ENCODE measurements at regions of chr3 and their contacts with region 1.

Region 1: DNA sequence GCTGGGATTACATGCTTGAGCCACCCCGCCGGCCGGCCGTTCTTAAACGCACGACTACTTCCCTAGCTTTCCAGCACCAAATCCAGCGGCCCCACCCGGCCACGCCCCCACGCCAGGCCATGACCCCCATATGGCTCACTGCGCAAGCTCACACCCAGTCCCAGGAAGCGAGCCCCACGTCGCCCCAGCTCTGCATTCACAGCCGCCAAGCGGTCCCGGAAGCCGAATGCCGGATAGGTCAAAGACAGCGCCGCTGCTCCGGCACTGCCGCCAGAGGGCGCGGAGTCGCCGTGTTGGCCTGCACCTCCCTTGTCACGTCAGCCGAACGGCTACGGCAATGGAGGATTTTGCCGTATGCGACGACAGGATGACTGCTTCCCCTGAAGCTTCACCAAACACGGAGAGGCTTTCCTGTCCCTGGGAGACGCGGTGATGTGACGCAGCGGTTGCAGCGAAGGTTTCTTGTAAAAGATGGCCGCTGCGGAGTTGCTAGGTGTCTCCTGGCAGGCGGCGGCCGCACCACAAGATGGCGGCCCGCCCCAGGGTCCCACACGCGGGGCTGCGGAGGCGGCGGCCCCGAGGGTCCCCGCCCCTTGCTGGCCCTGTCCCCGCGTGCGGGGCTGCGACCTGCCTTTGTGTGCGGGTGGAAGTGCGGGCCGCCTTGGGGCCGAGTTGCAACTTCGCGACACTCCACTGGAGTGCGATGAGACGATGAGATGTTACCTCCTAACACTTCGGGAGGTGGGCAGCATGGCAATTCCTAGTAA is 30.2 kb upstream of the RPN1 start:
- DNase-seq: peak; percentile 93
- ATAC-seq: peak; percentile 99
- H3K4me3 ChIP-seq: peak overlapping the region; percentile 73
- H3K27ac ChIP-seq: peak overlapping the region; percentile 83
- H3K4me1 ChIP-seq: peaks cover 5% of the 10 kb centered on the region
- H3K27me3 ChIP-seq: no peaks in the 10 kb centered on the region
- CTCF ChIP-seq: peak; percentile 79

Region 2: GRCh38 chr3:128623762-128624176 is 57.0 kb before region 1 on chr3:
- CTCF ChIA-PET with region 1: no interaction called
- POLR2A ChIA-PET with region 1: no interaction called
- intact Hi-C with region 1: no loop called
- DNase-seq: no peak
- ATAC-seq: no peak
- H3K4me3 ChIP-seq: no peak overlapping the region
- H3K27ac ChIP-seq: no peak overlapping the region
- H3K4me1 ChIP-seq: no peaks in the 10 kb centered on the region
- H3K27me3 ChIP-seq: no peaks in the 10 kb centered on the region
- CTCF ChIP-seq: no peak

Region 3: DNA sequence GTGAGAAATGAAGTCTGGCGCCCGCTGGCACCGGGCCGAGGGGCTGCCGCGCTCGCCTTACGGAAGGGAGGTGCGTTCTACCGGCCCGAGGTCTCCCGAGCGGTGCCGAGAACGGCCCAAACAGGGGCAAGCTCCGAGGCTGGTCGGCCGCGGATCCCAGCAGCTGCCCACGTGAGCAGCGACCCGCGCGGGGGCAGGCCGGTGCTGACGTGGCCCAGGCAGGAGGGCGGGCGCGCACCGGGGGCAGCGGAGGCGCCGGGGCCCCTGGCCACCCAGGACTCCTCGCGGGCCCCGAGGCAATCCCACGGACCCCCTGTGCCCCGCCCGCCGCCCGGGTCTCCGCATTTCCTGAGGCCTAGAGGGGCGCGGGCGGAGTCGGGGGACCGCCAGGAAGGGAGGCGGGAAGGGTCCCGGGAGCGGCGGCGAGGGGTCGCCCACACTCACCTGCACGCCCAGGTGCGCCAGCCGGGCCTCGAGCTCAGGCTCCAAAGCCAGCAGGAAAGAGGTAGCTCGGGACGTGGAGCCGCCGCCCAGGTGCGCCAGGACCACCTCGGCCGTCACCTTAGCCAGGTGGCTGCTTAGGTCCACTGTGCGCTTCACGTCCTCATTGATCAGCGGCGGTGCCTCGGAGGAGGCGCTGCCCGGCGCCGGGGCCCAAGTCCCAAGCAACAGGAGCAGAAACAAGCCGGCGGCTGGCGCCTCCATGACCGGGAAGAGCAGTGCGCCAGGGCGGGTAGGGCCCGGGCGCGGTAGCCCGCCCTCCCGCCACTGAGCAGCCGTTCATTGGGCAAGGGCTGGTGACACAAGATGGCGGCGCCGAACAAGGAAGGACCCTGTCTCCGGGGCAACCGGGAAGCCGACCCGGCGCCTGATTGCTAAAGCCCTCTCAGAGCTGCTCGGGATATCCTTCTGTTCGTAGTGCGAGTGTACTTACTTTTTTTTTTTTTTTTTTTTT is 30.4 kb before region 1 on chr3 and contains the start of gene RPN1:
- CTCF ChIA-PET with region 1: no interaction called
- POLR2A ChIA-PET with region 1: no interaction called
- intact Hi-C with region 1: loop called (anchors 2 kb)
- DNase-seq: peak; percentile 86
- ATAC-seq: peak; percentile 97
- H3K4me3 ChIP-seq: peak within 1 kb of the TSS; percentile 100
- H3K27ac ChIP-seq: peak within 1 kb of the TSS; percentile 68
- H3K4me1 ChIP-seq: peaks cover 6% of the 10 kb centered on the region; the same call in 1 of the 2 replicates
- H3K27me3 ChIP-seq: no peaks in the 10 kb centered on the region
- CTCF ChIP-seq: no peak
- total RNA-seq, gene RPN1: 262 and 270 TPM in 2 replicates

Region 4: DNA sequence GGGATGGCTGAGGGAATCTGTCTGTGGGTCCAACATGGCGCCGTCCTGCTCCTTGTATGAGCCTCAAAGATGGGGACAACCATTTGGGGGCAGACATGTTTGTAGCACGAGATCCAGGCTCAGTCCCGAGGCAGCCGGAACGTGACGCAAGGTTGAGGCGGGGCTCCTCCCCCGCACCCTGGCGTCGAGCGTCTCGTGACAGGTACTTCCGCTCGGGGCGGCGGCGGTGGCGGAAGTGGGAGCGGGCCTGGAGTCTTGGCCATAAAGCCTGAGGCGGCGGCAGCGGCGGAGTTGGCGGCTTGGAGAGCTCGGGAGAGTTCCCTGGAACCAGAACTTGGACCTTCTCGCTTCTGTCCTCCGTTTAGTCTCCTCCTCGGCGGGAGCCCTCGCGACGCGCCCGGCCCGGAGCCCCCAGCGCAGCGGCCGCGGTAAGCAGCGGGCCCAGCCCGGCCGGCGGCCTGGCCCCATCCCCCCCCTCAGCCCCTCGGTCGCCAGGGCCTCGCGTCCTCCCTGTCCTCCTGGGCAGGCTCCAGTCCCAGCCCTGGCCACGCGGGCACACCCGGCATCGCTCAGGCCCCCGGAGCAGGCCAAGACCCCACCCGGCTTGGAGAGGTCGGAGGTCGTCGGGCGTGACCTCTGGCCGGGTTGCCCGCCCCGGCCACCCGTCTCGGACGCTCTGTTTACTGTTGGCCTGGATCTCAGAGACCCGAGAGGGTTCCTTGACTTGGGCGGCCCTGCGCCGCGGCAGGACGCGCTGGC is 45.3 kb after region 1 on chr3 and contains the start of gene RAB7A:
- CTCF ChIA-PET with region 1: no interaction called
- POLR2A ChIA-PET with region 1: no interaction called
- intact Hi-C with region 1: loop called (anchors 2 kb)
- DNase-seq: peak; percentile 94
- ATAC-seq: peak; percentile 92
- H3K4me3 ChIP-seq: peak within 1 kb of the TSS; percentile 99
- H3K27ac ChIP-seq: peak within 1 kb of the TSS; percentile 76
- H3K4me1 ChIP-seq: peaks cover 20% of the 10 kb centered on the region
- H3K27me3 ChIP-seq: no peaks in the 10 kb centered on the region
- CTCF ChIP-seq: no peak
- total RNA-seq, gene RAB7A: 48.0 and 78.2 TPM in 2 replicates

Region 5: DNA sequence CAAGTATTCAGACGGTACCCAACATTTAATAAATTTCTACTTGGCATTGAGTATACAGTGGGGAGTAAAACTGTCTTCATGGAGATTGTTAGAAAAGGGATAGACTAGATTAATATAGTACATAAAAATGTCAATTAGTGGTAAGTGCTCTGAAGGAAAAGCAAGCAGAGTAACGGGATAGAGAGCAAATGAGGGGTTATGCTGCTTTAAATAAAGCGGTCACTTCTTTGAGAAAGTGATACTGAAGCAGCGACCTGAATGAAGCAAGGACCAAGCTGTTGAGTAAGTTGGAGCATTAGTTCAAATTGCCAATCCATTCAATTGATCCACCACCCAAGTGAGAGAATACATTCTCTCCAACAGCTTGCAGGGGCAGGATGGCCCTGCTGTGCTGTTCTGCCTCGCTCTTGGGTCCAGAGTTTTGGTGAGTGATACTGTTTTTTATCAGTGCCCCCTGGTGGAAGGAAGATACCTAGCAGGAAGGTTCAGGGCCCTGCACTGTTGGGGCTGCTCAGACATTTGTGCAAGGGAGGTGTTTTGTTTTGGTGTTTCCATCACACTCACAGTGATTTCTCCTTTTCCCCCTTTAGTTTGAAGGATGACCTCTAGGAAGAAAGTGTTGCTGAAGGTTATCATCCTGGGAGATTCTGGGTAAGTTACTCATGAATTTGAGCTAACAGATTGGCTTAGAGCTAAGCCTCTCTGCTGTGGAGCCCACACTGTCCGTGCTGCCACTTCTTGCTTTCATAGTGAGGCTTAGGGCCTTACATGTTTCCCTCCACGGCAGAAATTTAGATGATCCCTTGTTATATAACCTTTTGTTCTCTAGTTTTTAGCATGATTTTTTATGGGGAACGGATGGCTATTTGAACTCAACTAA is 114.2 kb after region 1 on chr3:
- CTCF ChIA-PET with region 1: interaction called, 3 read pairs
- POLR2A ChIA-PET with region 1: no interaction called
- intact Hi-C with region 1: loop called (anchors 2 kb)
- DNase-seq: peak; percentile 61
- ATAC-seq: peak; percentile 92
- H3K4me3 ChIP-seq: no peak overlapping the region
- H3K27ac ChIP-seq: no peak overlapping the region
- H3K4me1 ChIP-seq: no peaks in the 10 kb centered on the region
- H3K27me3 ChIP-seq: no peaks in the 10 kb centered on the region
- CTCF ChIP-seq: peak; percentile 77

Region 6: GRCh38 chr3:128879125-128879969 is 198.6 kb after region 1 on chr3 and contains the start of gene ACAD9:
- CTCF ChIA-PET with region 1: no interaction called
- POLR2A ChIA-PET with region 1: interaction called, 4 read pairs
- intact Hi-C with region 1: loop called (anchors 1 kb)
- DNase-seq: peak; percentile 94
- ATAC-seq: peak; percentile 90
- H3K4me3 ChIP-seq: peak within 1 kb of the TSS; percentile 99
- H3K27ac ChIP-seq: peak within 1 kb of the TSS; percentile 74
- H3K4me1 ChIP-seq: peaks cover 36% of the 10 kb centered on the region
- H3K27me3 ChIP-seq: no peaks in the 10 kb centered on the region
- CTCF ChIP-seq: no peak
- total RNA-seq, gene ACAD9: 38.2 and 38.6 TPM in 2 replicates